CD4-positive, alpha-beta memory T cell (primary cell): ENCODE measurements at regions of chr17 and their contacts with region 1.

Region 1: DNA sequence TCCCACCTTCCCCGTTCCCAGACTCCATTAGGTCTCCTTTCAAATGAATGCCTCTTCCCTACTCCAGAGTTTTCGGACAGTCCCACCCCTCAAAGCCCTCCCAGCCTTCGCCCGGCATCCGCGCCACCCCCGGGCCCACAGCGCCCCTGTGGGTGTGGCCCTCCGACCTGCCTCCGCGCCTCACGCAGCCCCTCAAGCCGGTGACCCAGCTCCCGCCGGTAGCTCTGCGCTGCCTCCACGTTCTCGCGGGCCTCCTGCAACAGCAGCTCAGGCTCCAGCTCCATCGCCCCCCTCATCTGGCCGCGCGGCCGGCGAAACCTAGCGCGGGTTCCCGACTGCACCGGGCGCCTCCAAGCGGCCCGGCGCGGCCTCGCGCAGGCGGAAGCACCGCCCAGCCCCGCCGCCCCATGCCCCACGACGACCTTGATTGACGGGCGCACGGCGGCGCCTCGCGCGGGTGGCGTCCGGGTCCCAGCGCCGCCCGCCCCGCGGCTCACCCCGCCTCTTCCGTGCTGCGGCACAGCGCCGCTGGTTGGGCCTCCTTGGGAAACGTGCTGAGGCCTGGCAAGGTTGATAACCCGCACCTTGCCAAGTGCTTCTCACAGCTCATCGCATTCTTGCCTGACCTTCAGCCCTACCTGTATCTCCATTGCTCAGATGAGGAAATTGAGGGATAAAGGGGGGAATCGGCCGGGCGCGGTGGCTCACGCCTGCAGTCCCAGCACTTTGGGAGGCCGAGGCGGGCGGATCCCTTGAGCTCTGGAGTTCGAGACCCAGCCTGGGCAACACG is at the start of gene CRLF3:
- DNase-seq: peak; percentile 87 to 93 (median 92)
- H3K4me3 ChIP-seq: peak within 1 kb of the TSS; percentile 90 to 92
- H3K4me3 Mint-ChIP-seq: peak within 1 kb of the TSS; percentile 93 to 100 (median 96)
- H3K27ac ChIP-seq: peak within 1 kb of the TSS; percentile 83
- H3K27ac Mint-ChIP-seq: peak within 1 kb of the TSS; percentile 81 to 97 (median 94)
- H3K4me1 ChIP-seq: peaks cover 44% of the 10 kb centered on the region
- H3K4me1 Mint-ChIP-seq: peaks cover 26 to 45% (median 34%) of the 10 kb centered on the region in 4 donors
- H3K27me3 ChIP-seq: no peaks in the 10 kb centered on the region
- H3K27me3 Mint-ChIP-seq: no peaks in the 10 kb centered on the region
- total RNA-seq, gene CRLF3: 92.7 to 95.0 TPM

Region 2: GRCh38 chr17:30716461-30717300 is 107.9 kb before region 1 on chr17:
- CTCF ChIA-PET with region 1: interaction called, 3 read pairs
- POLR2A ChIA-PET with region 1: no interaction called
- intact Hi-C with region 1: loop called (anchors 1 kb)
- DNase-seq: peak in 1 of 5 donors; percentile 27
- H3K4me3 ChIP-seq: no peak overlapping the region
- H3K4me3 Mint-ChIP-seq: no peak overlapping the region
- H3K27ac ChIP-seq: no peak overlapping the region
- H3K27ac Mint-ChIP-seq: peak overlapping the region in 1 of 7 donors; percentile 27
- H3K4me1 ChIP-seq: no peaks in the 10 kb centered on the region
- H3K4me1 Mint-ChIP-seq: peaks cover 5 to 11% (median 6%) of the 10 kb centered on the region in 4 donors
- H3K27me3 ChIP-seq: no peaks in the 10 kb centered on the region
- H3K27me3 Mint-ChIP-seq: no peaks in the 10 kb centered on the region

Region 3: DNA sequence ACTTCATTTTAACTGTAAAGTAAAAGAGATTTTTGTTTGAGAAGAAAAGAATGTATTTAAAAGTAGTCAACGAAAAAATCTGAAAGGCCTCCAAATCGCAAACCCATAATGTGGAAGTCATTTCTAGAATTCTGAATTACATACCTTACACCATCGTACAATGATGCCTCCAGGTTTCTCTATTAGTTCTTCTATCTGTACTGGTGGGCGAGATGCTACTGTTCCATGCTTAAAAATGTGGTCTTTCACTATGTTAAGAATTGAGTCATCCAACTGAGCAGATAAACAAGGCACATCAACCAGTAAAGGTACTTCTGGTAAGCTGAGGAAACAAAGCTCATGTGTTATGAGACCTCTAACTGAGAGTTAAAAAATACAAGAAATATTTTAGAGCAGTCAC is 28.5 kb before region 1 on chr17:
- CTCF ChIA-PET with region 1: interaction called, 29 read pairs
- POLR2A ChIA-PET with region 1: interaction called, 5 read pairs
- intact Hi-C with region 1: no loop called
- DNase-seq: no peak
- H3K4me3 ChIP-seq: no peak overlapping the region
- H3K4me3 Mint-ChIP-seq: no peak overlapping the region
- H3K27ac ChIP-seq: no peak overlapping the region
- H3K27ac Mint-ChIP-seq: peak overlapping the region in 6 of 7 donors; percentile 9 to 74 (median 35)
- H3K4me1 ChIP-seq: no peaks in the 10 kb centered on the region
- H3K4me1 Mint-ChIP-seq: peaks cover 4 to 14% (median 10%) of the 10 kb centered on the region in 4 donors
- H3K27me3 ChIP-seq: no peaks in the 10 kb centered on the region
- H3K27me3 Mint-ChIP-seq: no peaks in the 10 kb centered on the region

Region 4: DNA sequence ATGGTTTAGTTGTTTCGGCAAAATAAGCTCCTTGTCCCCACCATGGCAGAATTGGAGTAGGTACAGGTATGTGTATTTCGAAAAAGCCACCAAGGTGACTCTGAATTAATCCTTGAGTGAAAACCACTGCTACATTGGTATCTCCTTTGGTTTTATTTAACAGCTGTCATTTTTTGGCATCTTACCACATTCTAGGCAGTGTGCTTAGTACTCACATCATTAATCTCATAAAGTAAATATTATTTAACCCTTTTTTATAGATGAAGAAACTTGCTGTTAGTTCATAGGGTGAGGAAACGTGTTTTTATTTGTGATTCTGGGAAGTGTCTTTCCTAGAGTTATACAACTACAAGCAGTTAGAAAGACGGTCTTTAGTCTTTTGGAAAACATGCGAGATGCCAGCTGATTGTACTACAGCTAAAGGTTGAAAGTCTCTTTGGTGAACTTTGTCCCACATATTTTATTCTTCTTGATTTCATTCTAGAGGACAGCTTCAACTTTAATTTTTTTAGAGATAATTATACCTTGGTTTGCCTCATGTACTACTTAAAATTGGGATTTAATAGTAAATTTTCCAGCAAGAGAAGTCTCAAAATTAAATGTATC is 13.8 kb after region 1 on chr17:
- CTCF ChIA-PET with region 1: interaction called, 15 read pairs
- POLR2A ChIA-PET with region 1: interaction called, 7 read pairs
- intact Hi-C with region 1: no loop called
- DNase-seq: no peak
- H3K4me3 ChIP-seq: no peak overlapping the region
- H3K4me3 Mint-ChIP-seq: no peak overlapping the region
- H3K27ac ChIP-seq: no peak overlapping the region
- H3K27ac Mint-ChIP-seq: no peak overlapping the region
- H3K4me1 ChIP-seq: no peaks in the 10 kb centered on the region
- H3K4me1 Mint-ChIP-seq: no peaks in the 10 kb centered on the region
- H3K27me3 ChIP-seq: no peaks in the 10 kb centered on the region
- H3K27me3 Mint-ChIP-seq: no peaks in the 10 kb centered on the region

Region 5: GRCh38 chr17:30939051-30939689 is 114.6 kb after region 1 on chr17:
- CTCF ChIA-PET with region 1: no interaction called
- POLR2A ChIA-PET with region 1: no interaction called
- intact Hi-C with region 1: no loop called
- DNase-seq: peak in 1 of 5 donors; percentile 6
- H3K4me3 ChIP-seq: no peak overlapping the region
- H3K4me3 Mint-ChIP-seq: peak overlapping the region; percentile 27 to 75 (median 50)
- H3K27ac ChIP-seq: no peak overlapping the region
- H3K27ac Mint-ChIP-seq: peak overlapping the region; percentile 14 to 72 (median 45)
- H3K4me1 ChIP-seq: no peaks in the 10 kb centered on the region
- H3K4me1 Mint-ChIP-seq: peaks cover 2 to 5% (median 3%) of the 10 kb centered on the region in 4 donors
- H3K27me3 ChIP-seq: no peaks in the 10 kb centered on the region
- H3K27me3 Mint-ChIP-seq: no peaks in the 10 kb centered on the region